Dendritic cell treated with granulocyte-macrophage colony-stimulating factor and Interleukin-4, amounts not matched to agents 40 ng/mL and 50 ng/mL, for 4 days (primary cell): ENCODE measurements at regions of chr5 and their contacts with region 1.

Region 1: GRCh38 chr5:36870399-36871040 is 6.0 kb upstream of the NIPBL start:
- H3K4me3 Mint-ChIP-seq: no peak overlapping the region
- H3K27ac Mint-ChIP-seq: no peak overlapping the region
- H3K4me1 Mint-ChIP-seq: peaks cover 21% of the 10 kb centered on the region
- H3K27me3 Mint-ChIP-seq: no peaks in the 10 kb centered on the region

Region 2: GRCh38 chr5:36744773-36745589 is 125.5 kb before region 1 on chr5:
- intact Hi-C with region 1: loop called (anchors 2 kb)
- H3K4me3 Mint-ChIP-seq: peak overlapping the region; percentile 80
- H3K27ac Mint-ChIP-seq: peak overlapping the region; percentile 70
- H3K4me1 Mint-ChIP-seq: peaks cover 23% of the 10 kb centered on the region
- H3K27me3 Mint-ChIP-seq: peaks cover 29% of the 10 kb centered on the region

Region 3: GRCh38 chr5:36790838-36791237 is 79.7 kb before region 1 on chr5:
- intact Hi-C with region 1: loop called (anchors 10 kb)
- H3K4me3 Mint-ChIP-seq: no peak overlapping the region
- H3K27ac Mint-ChIP-seq: no peak overlapping the region
- H3K4me1 Mint-ChIP-seq: no peaks in the 10 kb centered on the region
- H3K27me3 Mint-ChIP-seq: peaks cover 4% of the 10 kb centered on the region